A673 (cell line): ENCODE measurements at regions of chr15 and their contacts with region 1.

Region 1: GRCh38 chr15:26461847-26462608 is 310.8 kb downstream of the GABRB3 start:
- DNase-seq: no peak
- H3K4me3 ChIP-seq: no peak overlapping the region
- H3K27ac ChIP-seq: no peak overlapping the region
- H3K4me1 ChIP-seq: no peaks in the 10 kb centered on the region
- H3K27me3 ChIP-seq: no peaks in the 10 kb centered on the region
- CTCF ChIP-seq: no peak

Region 2: GRCh38 chr15:26395624-26396023 is 66.4 kb before region 1 on chr15:
- CTCF ChIA-PET with region 1: no interaction called
- POLR2A ChIA-PET with region 1: no interaction called
- intact Hi-C with region 1: loop called (anchors 10 kb)
- DNase-seq: no peak
- H3K4me3 ChIP-seq: no peak overlapping the region
- H3K27ac ChIP-seq: no peak overlapping the region
- H3K4me1 ChIP-seq: no peaks in the 10 kb centered on the region
- H3K27me3 ChIP-seq: no peaks in the 10 kb centered on the region
- CTCF ChIP-seq: no peak

Region 3: GRCh38 chr15:26525096-26525495 is 63.1 kb after region 1 on chr15:
- CTCF ChIA-PET with region 1: no interaction called
- POLR2A ChIA-PET with region 1: no interaction called
- intact Hi-C with region 1: no loop called
- DNase-seq: no peak
- H3K4me3 ChIP-seq: no peak overlapping the region
- H3K27ac ChIP-seq: no peak overlapping the region
- H3K4me1 ChIP-seq: no peaks in the 10 kb centered on the region
- H3K27me3 ChIP-seq: no peaks in the 10 kb centered on the region
- CTCF ChIP-seq: no peak